ENCODE measurements at regions of chr19 and their contacts with region 1.

Region 1: GRCh38 chr19:57578487-57579205 is at the start of gene ZNF416:
- DNase-seq: peak; percentile 76 to 98 (median 96)
- ATAC-seq: peak; percentile 99
- H3K4me3 ChIP-seq: peak within 1 kb of the TSS; percentile 73
- H3K4me3 Mint-ChIP-seq: peak within 1 kb of the TSS; percentile 75 to 91 (median 85)
- H3K27ac ChIP-seq: peak within 1 kb of the TSS; percentile 80
- H3K27ac Mint-ChIP-seq: peak within 1 kb of the TSS; percentile 78 to 91 (median 87)
- H3K4me1 ChIP-seq: peaks cover 16 to 20% of the 10 kb centered on the region in 2 donors
- H3K4me1 Mint-ChIP-seq: peaks cover 13 to 35% (median 26%) of the 10 kb centered on the region in 7 donors
- H3K27me3 ChIP-seq: no peaks in the 10 kb centered on the region
- H3K27me3 Mint-ChIP-seq: no peaks in the 10 kb centered on the region
- total RNA-seq, gene ZNF416: 4.4 to 13.8 (median 5.7) TPM

Region 2: DNA sequence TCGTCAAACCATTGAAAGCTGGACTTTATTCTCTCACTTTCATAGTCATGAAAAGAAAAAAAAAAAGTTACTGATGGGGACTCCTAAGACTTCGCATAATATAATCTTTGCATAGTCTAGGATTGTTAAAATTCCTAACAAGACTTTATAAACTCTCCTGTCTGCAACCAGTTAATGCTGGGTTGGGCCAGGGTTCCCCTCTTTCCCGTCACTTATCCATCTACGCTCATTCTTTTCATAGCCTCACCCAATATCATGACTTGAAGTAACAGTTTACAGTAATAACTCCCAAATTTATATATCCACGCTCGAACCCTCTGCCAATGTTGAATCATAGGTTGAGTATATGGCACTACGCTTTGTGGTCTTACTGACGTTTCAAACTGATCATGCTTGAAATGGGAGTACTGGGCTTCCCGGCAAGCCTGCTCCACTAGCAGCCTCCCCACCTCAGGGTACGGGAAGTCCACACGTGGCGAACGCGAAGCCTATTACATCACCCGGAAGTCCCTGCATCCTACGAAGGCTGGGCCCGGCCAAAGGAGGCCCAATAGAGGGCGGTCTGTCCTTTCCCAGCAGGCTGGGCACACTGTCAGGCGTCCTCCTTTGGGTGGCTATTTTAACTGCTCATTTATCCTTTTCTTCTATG is 299.1 kb before region 1 on chr19:
- CTCF ChIA-PET with region 1: no interaction called
- POLR2A ChIA-PET with region 1: no interaction called
- intact Hi-C with region 1: loop called in 1 of 2 experiments (anchors 1 kb)
- DNase-seq: peak in 6 of 9 donors; percentile 60 to 81 (median 78)
- ATAC-seq: peak; percentile 85
- H3K4me3 ChIP-seq: peak overlapping the region; percentile 80
- H3K4me3 Mint-ChIP-seq: no peak overlapping the region
- H3K27ac ChIP-seq: peak overlapping the region; percentile 98
- H3K27ac Mint-ChIP-seq: peak overlapping the region in 2 of 9 donors; percentile 6 to 51
- H3K4me1 ChIP-seq: peaks cover 18 to 23% of the 10 kb centered on the region in 2 donors
- H3K4me1 Mint-ChIP-seq: peaks cover 7 to 33% (median 25%) of the 10 kb centered on the region in 7 donors
- H3K27me3 ChIP-seq: no peaks in the 10 kb centered on the region
- H3K27me3 Mint-ChIP-seq: no peaks in the 10 kb centered on the region

Region 3: DNA sequence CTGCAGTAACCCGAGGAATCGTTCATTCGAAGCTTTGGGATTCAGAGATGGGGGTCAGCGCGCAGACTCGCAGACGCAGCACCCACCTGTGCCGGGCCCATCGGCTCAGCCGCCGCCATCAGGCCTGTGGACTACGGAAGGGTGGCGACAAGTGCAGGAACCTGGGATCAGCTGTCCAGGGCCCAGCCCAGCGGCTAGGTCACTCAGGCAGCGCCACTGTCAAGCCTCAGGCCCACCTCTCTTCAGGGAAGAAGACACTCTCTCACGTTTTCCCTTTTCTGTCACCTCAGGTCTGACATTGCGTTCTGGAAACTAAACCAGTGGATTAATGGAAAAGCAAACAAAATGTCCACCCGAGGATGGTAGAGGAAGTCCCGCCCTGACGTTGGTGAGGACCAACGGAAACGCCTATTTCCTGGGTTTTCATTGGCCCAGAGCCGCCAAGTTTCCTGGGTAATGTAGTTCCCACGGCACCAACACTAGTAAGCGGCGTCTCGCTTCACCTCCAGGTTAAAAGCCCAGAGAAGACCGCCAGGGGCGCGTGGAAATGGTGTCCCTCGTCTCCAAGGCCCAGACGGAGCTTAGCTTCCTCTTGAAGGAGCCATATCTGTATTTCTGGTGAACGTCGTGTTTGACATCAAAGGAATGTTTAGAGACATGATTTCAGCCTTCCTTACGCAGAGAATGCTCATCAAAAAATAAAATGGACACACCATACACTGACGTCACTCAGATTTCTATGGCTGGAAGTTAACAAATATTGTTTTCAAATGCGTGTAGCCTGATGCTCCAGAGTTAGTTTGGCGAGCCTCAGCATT is 101.2 kb before region 1 on chr19 and contains the start of gene ZNF772:
- CTCF ChIA-PET with region 1: no interaction called
- POLR2A ChIA-PET with region 1: no interaction called
- intact Hi-C with region 1: loop called (anchors 2 kb)
- DNase-seq: peak; percentile 55 to 96 (median 88)
- ATAC-seq: peak; percentile 99
- H3K4me3 ChIP-seq: peak within 1 kb of the TSS; percentile 80
- H3K4me3 Mint-ChIP-seq: peak within 1 kb of the TSS; percentile 87 to 95 (median 92)
- H3K27ac ChIP-seq: peak within 1 kb of the TSS; percentile 77
- H3K27ac Mint-ChIP-seq: peak within 1 kb of the TSS; percentile 84 to 96 (median 89)
- H3K4me1 ChIP-seq: peaks cover 5 to 12% of the 10 kb centered on the region in 2 donors
- H3K4me1 Mint-ChIP-seq: peaks cover 10 to 26% (median 19%) of the 10 kb centered on the region in 7 donors
- H3K27me3 ChIP-seq: no peaks in the 10 kb centered on the region
- H3K27me3 Mint-ChIP-seq: peaks cover 0 to 7% (median 0%) of the 10 kb centered on the region in 5 donors
- total RNA-seq, gene ZNF772: 1.5 to 20.5 (median 4.3) TPM

Region 4: GRCh38 chr19:57599761-57600383 is 21.2 kb after region 1 on chr19 and contains the start of gene ZNF530:
- CTCF ChIA-PET with region 1: interaction called, 4 read pairs
- POLR2A ChIA-PET with region 1: interaction called, 8 read pairs
- intact Hi-C with region 1: loop called (anchors 1 kb)
- DNase-seq: peak; percentile 61 to 81 (median 73)
- ATAC-seq: peak; percentile 97
- H3K4me3 ChIP-seq: peak within 1 kb of the TSS; percentile 87
- H3K4me3 Mint-ChIP-seq: peak within 1 kb of the TSS; percentile 71 to 92 (median 89)
- H3K27ac ChIP-seq: peak within 1 kb of the TSS; percentile 69
- H3K27ac Mint-ChIP-seq: peak within 1 kb of the TSS in 8 of 9 donors; percentile 51 to 90 (median 81)
- H3K4me1 ChIP-seq: peaks cover 10% of the 10 kb centered on the region in 2 donors
- H3K4me1 Mint-ChIP-seq: peaks cover 14 to 28% (median 22%) of the 10 kb centered on the region in 7 donors
- H3K27me3 ChIP-seq: no peaks in the 10 kb centered on the region
- H3K27me3 Mint-ChIP-seq: no peaks in the 10 kb centered on the region
- total RNA-seq, gene ZNF530: 2.0 to 10.9 (median 6.2) TPM

Region 5: GRCh38 chr19:57620673-57621199 is 42.1 kb after region 1 on chr19:
- CTCF ChIA-PET with region 1: no interaction called
- POLR2A ChIA-PET with region 1: no interaction called
- intact Hi-C with region 1: no loop called
- DNase-seq: no peak
- ATAC-seq: no peak
- H3K4me3 ChIP-seq: no peak overlapping the region
- H3K4me3 Mint-ChIP-seq: peak overlapping the region in 2 of 10 donors; percentile 9 to 18
- H3K27ac ChIP-seq: no peak overlapping the region
- H3K27ac Mint-ChIP-seq: no peak overlapping the region
- H3K4me1 ChIP-seq: no peaks in the 10 kb centered on the region
- H3K4me1 Mint-ChIP-seq: peaks cover 6 to 20% (median 13%) of the 10 kb centered on the region in 7 donors
- H3K27me3 ChIP-seq: no peaks in the 10 kb centered on the region
- H3K27me3 Mint-ChIP-seq: no peaks in the 10 kb centered on the region

Region 6: DNA sequence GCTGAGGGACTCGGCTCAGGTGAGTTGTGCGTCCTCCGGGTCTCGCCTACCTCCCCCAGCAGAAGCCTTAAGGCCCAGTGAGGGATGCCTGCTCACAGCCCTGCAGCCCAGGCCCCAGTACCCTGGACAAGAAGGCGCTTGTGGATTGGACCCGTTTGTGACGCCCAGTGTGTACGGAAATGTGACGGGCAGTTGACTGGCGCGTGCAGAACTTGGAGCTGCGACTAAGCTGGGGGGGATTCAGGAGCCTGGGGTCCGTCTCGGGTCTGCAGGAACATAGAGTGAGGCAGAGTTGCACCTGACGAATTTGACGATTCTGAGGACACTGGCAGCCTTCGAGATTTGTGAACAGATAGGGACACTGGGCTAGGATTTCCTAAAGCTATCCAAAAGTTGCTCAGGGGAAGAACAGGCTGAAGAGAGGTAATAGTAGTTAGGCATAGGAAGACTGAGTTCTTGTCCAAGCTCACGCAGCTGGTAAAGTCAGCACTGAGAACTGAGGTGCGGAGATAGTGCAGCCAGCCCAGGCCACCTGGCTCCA is 103.7 kb after region 1 on chr19:
- CTCF ChIA-PET with region 1: no interaction called
- POLR2A ChIA-PET with region 1: interaction called, 7 read pairs
- intact Hi-C with region 1: loop called in 1 of 2 experiments (anchors 1 kb)
- DNase-seq: no peak
- ATAC-seq: no peak
- H3K4me3 ChIP-seq: peak overlapping the region; percentile 93
- H3K4me3 Mint-ChIP-seq: peak overlapping the region; percentile 89 to 99 (median 97)
- H3K27ac ChIP-seq: peak overlapping the region; percentile 80
- H3K27ac Mint-ChIP-seq: peak overlapping the region; percentile 90 to 98 (median 96)
- H3K4me1 ChIP-seq: peaks cover 9 to 13% of the 10 kb centered on the region in 2 donors
- H3K4me1 Mint-ChIP-seq: peaks cover 25 to 46% (median 39%) of the 10 kb centered on the region in 7 donors
- H3K27me3 ChIP-seq: no peaks in the 10 kb centered on the region
- H3K27me3 Mint-ChIP-seq: peaks cover 2 to 8% (median 7%) of the 10 kb centered on the region in 5 donors

Region 7: DNA sequence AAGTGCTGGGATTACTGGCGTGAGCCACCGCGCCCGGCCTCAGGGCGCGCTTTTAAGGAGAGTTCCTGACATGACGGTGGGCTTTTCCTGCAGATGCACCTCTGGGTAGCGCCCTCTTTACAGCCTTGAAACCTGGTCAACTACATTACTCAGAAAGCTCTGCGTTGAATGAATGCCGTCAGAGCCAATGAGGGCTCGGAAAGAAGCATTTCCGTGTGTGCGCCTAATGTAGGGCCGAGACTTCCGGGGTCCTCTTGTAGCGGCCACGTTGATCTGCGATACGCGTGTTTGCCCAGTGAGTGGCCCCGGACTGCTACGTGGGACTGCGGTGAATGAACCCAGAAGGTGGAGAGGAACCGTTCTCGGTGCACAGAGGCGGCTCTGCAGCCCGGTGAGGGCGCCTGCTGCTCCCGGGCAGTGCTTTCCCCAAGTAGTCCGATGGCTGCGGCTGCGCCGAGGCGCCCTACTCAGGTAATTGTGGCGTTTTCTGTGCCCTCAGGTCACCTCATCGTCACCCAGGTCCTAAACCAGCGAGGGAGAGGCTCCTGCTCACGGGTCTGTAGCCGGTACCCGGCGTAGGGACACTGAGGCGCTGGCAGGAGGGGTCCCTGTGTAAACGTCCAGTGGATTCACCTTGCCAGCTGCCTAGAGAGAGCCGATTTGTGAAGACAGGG is 241.0 kb after region 1 on chr19:
- CTCF ChIA-PET with region 1: no interaction called
- POLR2A ChIA-PET with region 1: interaction called, 3 read pairs
- intact Hi-C with region 1: loop called (anchors 2 to 10 kb)
- DNase-seq: peak; percentile 45 to 85 (median 79)
- ATAC-seq: peak; percentile 89
- H3K4me3 ChIP-seq: peak overlapping the region; percentile 98
- H3K4me3 Mint-ChIP-seq: peak overlapping the region; percentile 95 to 99 (median 98)
- H3K27ac ChIP-seq: peak overlapping the region; percentile 92
- H3K27ac Mint-ChIP-seq: peak overlapping the region; percentile 88 to 99 (median 95)
- H3K4me1 ChIP-seq: peaks cover 0 to 13% of the 10 kb centered on the region in 2 donors
- H3K4me1 Mint-ChIP-seq: peaks cover 38 to 73% (median 67%) of the 10 kb centered on the region in 7 donors
- H3K27me3 ChIP-seq: no peaks in the 10 kb centered on the region
- H3K27me3 Mint-ChIP-seq: no peaks in the 10 kb centered on the region

Measured in naive thymus-derived CD4-positive, alpha-beta T cell (primary cell).